SK-N-SH (cell line): ENCODE measurements at regions of chr4 and their contacts with region 1.

Region 1: DNA sequence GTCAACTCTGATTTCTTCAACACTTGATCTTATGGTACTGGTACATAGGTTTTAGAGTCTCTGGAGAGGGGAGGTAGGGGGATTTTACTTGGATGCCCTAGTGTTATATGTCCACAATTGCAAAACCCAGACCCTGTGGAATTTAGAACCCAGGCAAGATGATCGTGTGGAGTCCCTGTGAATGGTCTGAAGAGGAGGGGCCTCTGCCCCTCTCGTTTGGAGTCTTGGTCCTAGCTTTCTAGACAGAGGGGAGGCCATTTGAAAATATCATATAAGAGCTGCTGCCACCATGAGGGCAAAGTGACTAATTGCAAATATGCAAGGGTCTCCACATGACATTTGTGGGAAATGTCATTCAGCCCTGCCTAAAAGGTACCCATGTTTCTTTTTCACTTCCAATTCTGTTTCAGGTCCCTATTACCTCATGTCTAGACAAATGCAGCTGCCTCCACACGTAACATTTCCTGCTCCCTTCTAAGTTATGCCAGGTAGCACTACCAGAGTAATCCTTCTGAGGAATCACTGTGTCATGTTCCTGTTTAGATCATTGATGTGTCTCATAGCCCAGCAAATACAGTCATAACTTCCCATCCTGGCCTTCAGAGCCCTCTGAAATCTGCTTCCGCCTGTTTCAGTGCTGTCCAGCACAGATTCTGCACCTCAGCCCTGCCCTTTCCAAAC is 126.8 kb downstream of the KLHL8 start:
- DNase-seq: peak; percentile 67
- H3K4me3 ChIP-seq: no peak overlapping the region
- H3K27ac ChIP-seq: peak overlapping the region in 1 of 2 experiments; percentile 47; a peak in 2 of 4 replicates
- H3K4me1 ChIP-seq: peaks cover 9 to 10% of the 10 kb centered on the region in 2 experiments; a peak in 3 of 4 replicates
- H3K27me3 ChIP-seq: no peaks in the 10 kb centered on the region
- CTCF ChIP-seq: peak; percentile 71
- EP300 ChIP-seq: no peak
- RAD21 ChIP-seq: peak; percentile 88

Region 2: DNA sequence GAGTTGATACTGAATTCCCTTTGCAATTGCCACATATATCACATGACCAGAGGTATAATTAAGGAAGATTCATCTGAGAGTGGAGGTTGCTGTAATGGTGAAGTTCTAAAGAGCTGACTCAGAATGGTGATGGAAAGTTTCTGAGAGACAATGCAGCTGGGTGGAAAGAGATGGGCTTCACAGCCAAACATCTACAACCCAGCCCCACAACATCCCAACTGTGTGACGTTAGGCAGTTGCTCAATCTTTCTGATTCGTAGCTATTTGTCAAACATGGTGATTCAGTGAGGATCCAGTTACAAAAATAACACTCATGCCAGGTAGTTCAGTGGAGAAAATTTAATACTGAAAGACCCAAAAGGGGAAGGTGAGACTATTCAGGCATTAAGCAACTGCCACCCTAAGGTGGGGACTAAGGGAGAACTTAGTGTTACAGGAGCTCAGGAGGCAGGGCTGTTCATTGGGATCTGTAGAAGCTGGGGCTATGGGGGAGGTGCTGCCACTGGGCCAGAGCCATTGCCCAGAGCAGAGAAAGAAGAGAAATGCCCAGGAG is 165.7 kb before region 1 on chr4:
- CTCF ChIA-PET with region 1: interaction called, 138 read pairs
- POLR2A ChIA-PET with region 1: interaction called, 5 read pairs
- DNase-seq: no peak
- H3K4me3 ChIP-seq: no peak overlapping the region
- H3K27ac ChIP-seq: no peak overlapping the region; a peak in 1 of 4 replicates
- H3K4me1 ChIP-seq: peaks cover 0 to 3% of the 10 kb centered on the region in 2 experiments; a peak in 1 of 4 replicates
- H3K27me3 ChIP-seq: no peaks in the 10 kb centered on the region
- CTCF ChIP-seq: no peak
- EP300 ChIP-seq: no peak
- RAD21 ChIP-seq: no peak

Region 3: GRCh38 chr4:87006676-87007527 is 86.7 kb before region 1 on chr4:
- CTCF ChIA-PET with region 1: interaction called, 35 read pairs
- POLR2A ChIA-PET with region 1: interaction called, 8 read pairs
- DNase-seq: peak; percentile 95
- H3K4me3 ChIP-seq: peak overlapping the region; percentile 88 to 90
- H3K27ac ChIP-seq: peak overlapping the region; percentile 98 to 99
- H3K4me1 ChIP-seq: peaks cover 6 to 11% of the 10 kb centered on the region in 2 experiments; a peak in 2 of 4 replicates
- H3K27me3 ChIP-seq: no peaks in the 10 kb centered on the region
- CTCF ChIP-seq: peak; percentile 3; the same call in 1 of the 2 replicates
- EP300 ChIP-seq: peak in 1 of 2 experiments; percentile 5; a peak in 1 of 4 replicates
- RAD21 ChIP-seq: no peak; the same call in 1 of the 2 replicates

Region 4: DNA sequence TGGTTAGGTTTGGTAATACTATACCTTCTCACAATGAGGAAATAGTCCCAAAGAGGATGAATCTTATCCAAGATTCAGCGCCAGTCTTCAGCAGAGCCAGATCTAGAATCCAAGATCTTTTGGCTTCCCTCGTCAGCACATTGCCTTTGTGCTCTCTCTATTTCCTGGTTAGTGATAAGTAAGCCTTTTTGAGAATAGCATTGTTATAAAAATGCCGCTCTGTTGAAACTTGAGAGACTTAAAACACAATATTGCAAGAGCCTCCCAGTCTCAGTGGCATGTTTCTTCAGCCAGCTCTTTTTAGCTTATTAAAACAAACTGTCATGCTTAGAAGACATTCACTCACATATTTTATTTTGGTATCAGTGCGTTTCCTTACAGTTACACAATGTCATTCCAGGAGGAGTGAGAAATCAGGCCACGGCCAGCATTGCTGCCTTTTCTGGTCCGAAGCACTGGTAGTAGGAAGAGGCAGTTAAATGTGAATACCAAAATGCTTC is 14.5 kb before region 1 on chr4:
- CTCF ChIA-PET with region 1: interaction called, 20 read pairs
- POLR2A ChIA-PET with region 1: interaction called, 3 read pairs
- DNase-seq: no peak
- H3K4me3 ChIP-seq: no peak overlapping the region
- H3K27ac ChIP-seq: no peak overlapping the region
- H3K4me1 ChIP-seq: no peaks in the 10 kb centered on the region; a peak in 1 of 4 replicates
- H3K27me3 ChIP-seq: no peaks in the 10 kb centered on the region
- CTCF ChIP-seq: no peak
- EP300 ChIP-seq: no peak
- RAD21 ChIP-seq: no peak